ENCODE measurements at regions of chr2 and their contacts with region 1.

Region 1: DNA sequence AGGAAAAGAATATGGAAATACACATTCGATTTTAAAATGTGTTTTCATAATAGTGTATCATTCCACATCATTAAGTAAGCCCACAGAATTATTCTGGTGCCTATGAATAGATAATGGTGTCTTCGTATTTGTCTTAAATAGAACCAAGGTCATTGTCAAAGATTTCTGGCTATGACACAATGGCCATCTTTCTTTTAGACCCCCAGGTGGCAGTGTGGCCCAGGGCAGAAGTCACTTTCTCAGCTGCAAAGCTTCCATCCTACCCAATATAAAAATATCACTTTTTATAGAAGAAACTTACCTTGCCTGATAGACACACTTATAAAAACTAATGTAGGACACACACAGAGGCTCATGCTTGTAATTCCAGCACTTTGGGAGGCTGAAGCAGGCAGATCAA is 57.5 kb downstream of the ZRANB3 start:
- DNase-seq: peak; percentile 21
- ATAC-seq: peak; percentile 43; the same call in 1 of the 2 replicates
- H3K4me3 Mint-ChIP-seq: no peak overlapping the region
- H3K27ac Mint-ChIP-seq: no peak overlapping the region
- H3K4me1 Mint-ChIP-seq: no peaks in the 10 kb centered on the region
- H3K27me3 Mint-ChIP-seq: no peaks in the 10 kb centered on the region
- CTCF ChIP-seq: no peak

Region 2: DNA sequence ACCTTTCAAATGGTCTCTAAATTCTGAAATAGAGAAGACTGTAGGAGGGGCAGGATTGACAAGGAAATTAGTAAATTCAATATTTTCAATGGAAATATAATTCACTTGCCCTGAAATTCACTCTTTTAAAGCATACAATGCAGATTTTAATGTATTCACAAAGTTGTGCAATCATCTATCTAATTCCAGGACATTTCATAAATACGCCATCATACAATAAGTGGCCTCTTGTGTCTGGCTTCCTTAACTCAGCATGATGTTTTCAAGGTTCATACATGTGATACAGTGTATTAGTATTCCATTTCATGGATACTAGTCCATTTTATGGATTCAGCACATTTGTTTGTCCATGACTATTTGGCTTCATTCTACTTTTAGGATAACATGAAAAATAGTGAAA is 16.7 kb before region 1 on chr2:
- CTCF ChIA-PET with region 1: interaction called, 11 read pairs
- POLR2A ChIA-PET with region 1: no interaction called
- DNase-seq: no peak
- ATAC-seq: no peak
- H3K4me3 Mint-ChIP-seq: no peak overlapping the region
- H3K27ac Mint-ChIP-seq: no peak overlapping the region
- H3K4me1 Mint-ChIP-seq: peaks cover 12% of the 10 kb centered on the region
- H3K27me3 Mint-ChIP-seq: no peaks in the 10 kb centered on the region
- CTCF ChIP-seq: no peak

Region 3: GRCh38 chr2:135709992-135710391 is 236.4 kb after region 1 on chr2:
- CTCF ChIA-PET with region 1: interaction called, 32 read pairs
- POLR2A ChIA-PET with region 1: no interaction called
- DNase-seq: peak; percentile 62
- ATAC-seq: peak; percentile 58; the same call in 1 of the 2 replicates
- H3K4me3 Mint-ChIP-seq: no peak overlapping the region
- H3K27ac Mint-ChIP-seq: no peak overlapping the region; the same call in 1 of the 2 replicates
- H3K4me1 Mint-ChIP-seq: no peaks in the 10 kb centered on the region
- H3K27me3 Mint-ChIP-seq: no peaks in the 10 kb centered on the region
- CTCF ChIP-seq: peak; percentile 92